ENCODE measurements at regions of chr16 and their contacts with region 1.

Region 1: DNA sequence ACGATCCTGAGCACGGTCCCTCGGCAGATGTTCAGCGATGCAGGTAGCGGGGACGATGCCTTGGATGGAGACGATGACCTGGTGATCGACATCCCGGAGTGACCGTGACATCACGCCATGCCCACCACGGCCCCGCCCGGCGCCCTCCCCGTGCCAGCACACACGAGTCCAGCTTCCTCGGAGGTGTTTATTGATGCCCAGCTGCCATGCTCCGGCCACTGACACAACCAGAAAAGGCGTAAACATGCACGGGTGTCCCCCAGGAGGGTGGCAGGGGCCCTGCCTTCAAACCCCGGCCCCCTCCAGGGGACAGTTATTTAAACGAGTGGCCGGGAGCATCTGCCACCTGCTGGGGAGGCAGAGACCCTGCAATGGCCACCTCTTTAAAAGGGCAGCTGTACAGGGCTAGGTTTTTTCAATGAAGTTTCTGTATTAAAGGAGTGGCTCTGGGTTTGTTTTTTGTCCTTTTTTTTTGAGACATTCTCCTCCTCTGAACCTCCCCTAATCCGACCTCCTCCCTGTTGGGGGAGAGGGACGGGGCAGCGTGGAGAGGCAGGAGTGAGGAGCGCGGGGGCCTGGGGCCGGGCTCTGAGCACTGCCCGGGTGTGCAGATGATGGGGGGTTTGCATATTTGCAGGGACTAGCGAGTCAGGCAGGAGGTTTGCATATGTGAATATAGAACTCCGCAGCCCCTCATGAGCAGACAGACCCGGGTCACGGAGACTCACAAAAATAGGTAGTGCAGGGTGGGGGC is 5.3 kb downstream of the DOC2A start:
- DNase-seq: no peak
- ATAC-seq: peak; percentile 62

Region 2: DNA sequence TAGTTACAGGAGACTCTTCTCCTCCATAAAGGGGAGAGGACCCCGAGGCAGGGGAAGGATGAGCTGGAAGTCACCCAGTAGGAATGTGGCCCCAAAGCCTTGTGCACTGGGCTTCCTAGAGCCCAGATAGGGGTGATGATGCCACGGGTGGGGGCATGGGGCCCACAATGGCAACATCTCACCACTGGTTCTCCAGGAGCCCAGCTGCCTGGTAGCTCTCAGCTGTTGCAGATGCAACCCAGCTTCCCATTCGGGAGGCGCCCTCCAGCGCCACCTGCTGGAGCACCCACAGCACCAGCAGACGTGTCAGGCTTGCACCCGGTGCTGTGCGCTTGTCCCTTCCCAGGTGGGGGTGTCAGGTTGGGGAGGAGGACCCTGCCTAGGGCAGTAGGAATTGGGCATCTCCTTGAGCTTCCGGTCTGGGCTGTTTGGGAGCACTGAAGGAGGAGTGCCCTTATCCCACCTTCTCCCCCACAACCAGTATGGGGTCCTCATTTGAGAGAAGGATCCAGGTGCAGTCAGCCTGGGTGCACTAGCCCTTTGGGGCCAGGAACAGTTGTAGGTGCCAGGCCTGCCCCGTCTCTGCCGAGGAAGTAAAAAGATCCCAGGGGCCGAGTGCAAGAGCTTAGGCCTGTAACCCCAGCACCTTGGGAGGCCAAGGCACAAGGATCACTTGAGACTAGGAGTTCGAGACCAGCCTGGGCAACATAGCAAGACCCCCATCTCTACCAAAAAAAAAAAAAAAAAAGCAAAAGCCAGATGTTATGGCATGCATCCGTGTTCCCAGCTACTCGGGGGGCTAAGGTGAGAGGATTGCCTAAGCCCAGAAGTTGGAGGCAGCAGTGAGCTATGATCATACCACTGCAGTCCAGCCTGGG is 156.9 kb before region 1 on chr16:
- intact Hi-C with region 1: no loop called
- DNase-seq: peak; percentile 83
- ATAC-seq: peak; percentile 88

Region 3: DNA sequence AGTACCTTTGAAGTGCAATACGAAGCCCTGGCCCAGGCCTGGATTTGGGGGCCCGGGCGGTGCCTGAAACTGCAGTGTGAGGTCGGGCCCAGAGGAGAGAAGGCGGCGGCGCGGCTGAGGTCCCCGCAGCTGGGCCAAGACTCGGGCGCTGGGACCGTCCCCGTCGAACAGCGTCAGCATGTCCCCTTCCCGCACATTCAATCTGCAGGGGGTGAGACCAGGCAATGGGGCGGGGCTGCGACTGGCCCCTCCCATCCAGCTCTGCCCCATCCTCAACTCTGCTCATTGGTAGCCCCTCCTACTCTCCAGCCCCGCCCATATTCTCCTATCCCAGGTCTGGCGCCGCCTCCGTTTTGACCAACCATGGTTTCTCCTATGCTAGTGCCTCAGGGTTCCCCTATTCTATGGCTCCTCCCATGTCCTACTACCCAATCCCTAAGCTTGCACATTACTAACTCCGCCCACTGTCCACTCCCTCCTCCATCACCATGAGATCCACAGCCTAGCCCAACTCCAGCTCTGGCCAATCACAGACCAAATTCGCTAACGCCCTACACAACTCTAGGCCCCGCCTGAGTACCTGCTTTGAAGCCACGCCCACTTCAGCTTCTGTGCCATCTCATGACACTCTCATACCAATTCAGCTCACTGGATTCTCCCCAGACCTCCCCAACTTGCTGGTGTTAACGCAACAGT is 128.1 kb before region 1 on chr16:
- intact Hi-C with region 1: loop called (anchors 10 kb)
- DNase-seq: no peak
- ATAC-seq: no peak

Region 4: DNA sequence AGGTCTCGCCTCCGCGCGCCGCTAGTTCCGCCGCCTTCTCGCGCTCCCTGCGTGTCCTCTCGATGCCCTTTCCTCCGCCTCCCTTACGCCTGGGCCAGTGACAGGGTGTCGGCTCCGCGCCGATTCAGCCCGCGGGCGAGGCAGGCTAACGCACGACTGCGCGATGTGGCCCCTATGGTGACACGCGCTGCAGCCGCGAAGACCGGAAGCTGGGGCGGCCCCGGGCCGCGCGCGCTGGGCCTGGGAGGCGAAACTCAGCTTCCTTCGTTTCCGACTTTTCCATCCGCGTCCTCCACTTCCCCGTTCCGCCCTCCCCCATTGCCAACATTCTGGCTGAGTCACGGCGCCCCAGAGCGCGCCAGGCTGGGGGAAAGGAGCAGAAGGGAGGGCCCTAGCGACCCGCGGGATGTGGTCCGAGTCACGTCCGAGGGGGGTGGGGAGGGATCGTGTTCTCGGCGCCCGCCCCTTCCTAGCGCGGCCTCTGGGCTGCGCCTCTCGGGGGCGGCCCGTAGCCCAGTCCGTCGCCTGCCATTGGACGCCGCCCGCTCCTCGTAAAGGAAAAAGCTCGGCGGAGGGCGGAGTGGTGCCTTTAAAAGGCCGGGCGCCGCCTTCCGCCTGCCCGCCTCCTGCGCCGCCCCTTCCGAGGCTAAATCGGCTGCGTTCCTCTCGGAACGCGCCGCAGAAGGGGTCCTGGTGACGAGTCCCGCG is 59.8 kb after region 1 on chr16 and contains the start of gene ALDOA:
- intact Hi-C with region 1: no loop called
- DNase-seq: peak; percentile 99
- ATAC-seq: peak; percentile 86
- total RNA-seq, gene ALDOA: 3,843 TPM

Measured in Right ventricle myocardium superior (tissue), 1 donor.